Activated CD4-positive, alpha-beta T cell treated with anti-CD3 and anti-CD28 coated beads, Interleukin-2, amount 10 ng/mL, durations not matched to agents 7 days and 5 days (primary cell): ENCODE measurements at regions of chr15 and their contacts with region 1.

Region 1: DNA sequence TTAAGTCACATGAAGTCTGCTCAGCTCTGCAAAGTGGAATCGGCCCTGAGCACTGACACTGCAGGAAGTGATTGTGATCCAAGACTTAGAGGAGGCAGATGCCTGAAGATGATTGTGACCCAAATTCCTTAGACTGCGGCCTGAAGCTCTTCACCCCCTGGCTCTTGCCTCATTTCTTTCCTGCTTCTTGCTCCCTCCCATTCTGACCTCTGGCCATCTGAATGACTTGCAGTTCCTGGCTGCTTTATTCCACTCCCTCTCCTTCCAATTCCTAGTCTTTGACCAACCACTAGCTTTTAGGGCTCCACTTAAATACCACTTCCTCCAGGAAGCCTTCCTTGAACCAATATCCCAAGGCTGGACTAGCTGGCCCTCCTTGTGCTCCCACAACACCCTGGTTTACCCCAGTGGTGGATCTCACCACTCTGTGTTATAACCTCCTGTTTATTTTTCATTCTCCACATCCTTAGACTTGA is 9.9 kb upstream of the EPB42 start:
- DNase-seq: no peak
- H3K4me3 Mint-ChIP-seq: no peak overlapping the region
- H3K27ac Mint-ChIP-seq: no peak overlapping the region
- H3K4me1 Mint-ChIP-seq: peaks cover 2% of the 10 kb centered on the region
- H3K27me3 Mint-ChIP-seq: no peaks in the 10 kb centered on the region

Region 2: GRCh38 chr15:42808913-42809312 is 421.8 kb before region 1 on chr15:
- CTCF ChIA-PET with region 1: no interaction called
- POLR2A ChIA-PET with region 1: no interaction called
- DNase-seq: no peak
- H3K4me3 Mint-ChIP-seq: no peak overlapping the region
- H3K27ac Mint-ChIP-seq: no peak overlapping the region
- H3K4me1 Mint-ChIP-seq: no peaks in the 10 kb centered on the region
- H3K27me3 Mint-ChIP-seq: no peaks in the 10 kb centered on the region

Region 3: GRCh38 chr15:43268111-43269105 is 37.7 kb after region 1 on chr15:
- CTCF ChIA-PET with region 1: interaction called, 32 read pairs
- POLR2A ChIA-PET with region 1: no interaction called
- DNase-seq: no peak
- H3K4me3 Mint-ChIP-seq: no peak overlapping the region
- H3K27ac Mint-ChIP-seq: no peak overlapping the region
- H3K4me1 Mint-ChIP-seq: peaks cover 14% of the 10 kb centered on the region
- H3K27me3 Mint-ChIP-seq: peaks cover 24% of the 10 kb centered on the region

Region 4: DNA sequence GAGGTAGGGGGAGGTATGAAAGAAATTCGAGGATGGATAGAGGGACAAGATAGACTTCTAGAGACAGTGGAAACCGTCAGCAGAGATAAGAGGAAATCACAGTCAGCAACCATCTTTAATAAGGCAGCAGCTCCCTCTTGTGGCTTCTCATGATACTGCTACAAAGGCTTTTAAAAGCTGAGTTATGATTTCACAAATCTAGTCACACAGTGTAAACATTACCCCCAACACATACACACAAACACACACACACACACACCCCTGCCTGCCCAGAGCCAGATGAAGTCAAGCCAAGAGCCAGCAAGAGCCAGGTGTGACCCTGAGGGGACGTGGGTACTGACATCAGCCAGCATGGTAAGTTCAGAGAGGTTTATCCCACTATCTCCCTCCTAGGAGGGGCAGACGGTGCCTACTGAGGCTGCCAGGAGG is 54.9 kb after region 1 on chr15:
- CTCF ChIA-PET with region 1: interaction called, 51 read pairs
- POLR2A ChIA-PET with region 1: no interaction called
- DNase-seq: peak; percentile 77
- H3K4me3 Mint-ChIP-seq: no peak overlapping the region
- H3K27ac Mint-ChIP-seq: no peak overlapping the region
- H3K4me1 Mint-ChIP-seq: peaks cover 11% of the 10 kb centered on the region
- H3K27me3 Mint-ChIP-seq: peaks cover 9% of the 10 kb centered on the region